ENCODE measurements at regions of chr17 and their contacts with region 1.

Region 1: DNA sequence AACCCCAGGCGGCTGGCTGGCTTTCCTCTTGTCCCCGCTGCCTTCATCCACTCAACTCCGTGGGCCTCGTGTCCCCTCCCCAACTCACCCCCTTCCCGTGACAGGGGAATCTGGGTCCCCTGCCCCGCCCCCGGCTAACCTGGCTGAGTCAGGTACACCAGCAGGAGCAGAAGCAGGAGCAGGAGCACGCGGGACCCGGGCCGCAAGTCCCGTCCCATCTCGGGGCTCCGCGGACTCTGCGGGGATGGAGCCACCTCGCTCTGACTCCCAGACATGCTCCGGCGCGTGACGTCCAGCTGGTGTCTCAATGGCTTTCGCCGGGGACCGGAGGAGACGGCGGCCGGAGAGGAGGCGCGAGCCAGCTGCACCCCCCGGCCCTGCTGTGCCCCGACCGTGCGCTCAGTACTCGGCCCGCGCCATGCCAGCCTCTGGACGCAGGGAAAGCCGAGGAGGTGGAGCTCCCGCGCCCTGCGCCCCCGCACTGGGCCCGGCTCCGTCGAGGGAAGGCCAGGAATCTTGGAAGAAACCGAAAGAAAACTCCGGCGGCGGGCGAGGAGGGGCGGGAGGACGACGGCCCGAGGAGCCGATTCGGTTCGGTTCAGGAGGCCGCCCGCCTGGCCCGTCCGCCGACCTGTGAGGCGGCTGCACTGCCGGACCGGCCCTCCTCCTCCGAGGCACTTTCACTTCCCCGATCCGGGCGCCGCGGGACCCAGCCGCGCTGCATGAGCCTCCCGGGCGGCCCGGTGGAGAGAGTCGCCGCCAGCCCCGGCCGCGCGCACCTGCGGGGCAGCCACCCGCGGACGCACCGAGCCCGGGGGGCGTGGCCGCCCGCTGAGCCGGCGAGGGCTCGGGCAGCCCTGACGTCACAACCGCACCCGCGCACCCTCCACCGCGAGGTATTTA is at the starts of genes CXCL16 and ZMYND15:
- DNase-seq: peak; percentile 35 to 84 (median 70)
- ATAC-seq: peak; percentile 70
- H3K4me3 ChIP-seq: peak within 1 kb of the TSS; percentile 62 to 77
- H3K4me3 Mint-ChIP-seq: peak within 1 kb of the TSS; percentile 92
- H3K27ac ChIP-seq: peak within 1 kb of the TSS in 1 of 2 experiments; percentile 26
- H3K27ac Mint-ChIP-seq: peak within 1 kb of the TSS; percentile 92
- H3K4me1 ChIP-seq: peaks cover 10% of the 10 kb centered on the region
- H3K4me1 Mint-ChIP-seq: peaks cover 16% of the 10 kb centered on the region
- H3K27me3 ChIP-seq: peaks cover 0 to 10% of the 10 kb centered on the region in 2 experiments
- H3K27me3 Mint-ChIP-seq: peaks cover 7% of the 10 kb centered on the region
- CTCF ChIP-seq: no peak
- total RNA-seq, gene CXCL16: 41.5 to 42.3 TPM
- total RNA-seq, gene ZMYND15: 3.1 to 3.8 TPM

Region 2: GRCh38 chr17:4635823-4636375 is 103.5 kb before region 1 on chr17:
- CTCF ChIA-PET with region 1: no interaction called
- POLR2A ChIA-PET with region 1: no interaction called
- intact Hi-C with region 1: no loop called
- DNase-seq: no peak
- ATAC-seq: no peak
- H3K4me3 ChIP-seq: no peak overlapping the region
- H3K4me3 Mint-ChIP-seq: no peak overlapping the region
- H3K27ac ChIP-seq: no peak overlapping the region
- H3K27ac Mint-ChIP-seq: no peak overlapping the region
- H3K4me1 ChIP-seq: no peaks in the 10 kb centered on the region
- H3K4me1 Mint-ChIP-seq: peaks cover 12% of the 10 kb centered on the region
- H3K27me3 ChIP-seq: peaks cover 0 to 7% of the 10 kb centered on the region in 2 experiments
- H3K27me3 Mint-ChIP-seq: peaks cover 43% of the 10 kb centered on the region
- CTCF ChIP-seq: no peak

Region 3: DNA sequence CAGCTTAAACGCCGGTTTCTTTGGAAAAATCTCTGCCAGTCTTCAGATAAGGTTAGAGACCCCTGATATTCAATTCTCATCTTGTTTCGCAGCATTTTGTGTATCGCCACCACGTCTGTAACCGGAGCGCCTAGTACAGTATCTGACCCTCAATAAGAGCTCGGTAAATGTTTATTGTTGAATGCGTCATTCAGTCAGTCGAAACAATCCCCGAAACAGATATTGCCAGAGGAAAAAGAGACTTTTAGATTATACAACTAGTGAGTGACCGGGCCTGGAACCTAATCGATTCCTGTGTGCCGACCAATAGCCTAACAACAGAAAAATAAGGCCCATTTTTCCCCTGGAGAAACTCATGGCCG is 36.1 kb before region 1 on chr17:
- CTCF ChIA-PET with region 1: interaction called, 3 read pairs
- POLR2A ChIA-PET with region 1: interaction called, 4 read pairs
- intact Hi-C with region 1: loop called in 1 of 2 experiments (anchors 5 kb)
- DNase-seq: no peak
- ATAC-seq: peak; percentile 11
- H3K4me3 ChIP-seq: peak overlapping the region; percentile 83 to 96
- H3K4me3 Mint-ChIP-seq: peak overlapping the region; percentile 92
- H3K27ac ChIP-seq: peak overlapping the region; percentile 86 to 96
- H3K27ac Mint-ChIP-seq: peak overlapping the region; percentile 91
- H3K4me1 ChIP-seq: peaks cover 26% of the 10 kb centered on the region
- H3K4me1 Mint-ChIP-seq: peaks cover 39% of the 10 kb centered on the region
- H3K27me3 ChIP-seq: no peaks in the 10 kb centered on the region
- H3K27me3 Mint-ChIP-seq: no peaks in the 10 kb centered on the region
- CTCF ChIP-seq: no peak